IMR-90 (cell line): ENCODE measurements at regions of chr13 and their contacts with region 1.

Region 1: GRCh38 chr13:49314344-49314882 is 66.7 kb downstream of the CDADC1 start:
- DNase-seq: peak; percentile 65
- ATAC-seq: peak; percentile 45
- H3K4me3 ChIP-seq: no peak overlapping the region
- H3K27ac ChIP-seq: peak overlapping the region; percentile 97
- H3K4me1 ChIP-seq: peaks cover 17% of the 10 kb centered on the region
- H3K27me3 ChIP-seq: no peaks in the 10 kb centered on the region
- CTCF ChIP-seq: no peak
- POLR2A ChIP-seq: no peak
- RAD21 ChIP-seq: no peak

Region 2: GRCh38 chr13:49356223-49356622 is 41.8 kb after region 1 on chr13:
- CTCF ChIA-PET with region 1: interaction called, 3 read pairs
- POLR2A ChIA-PET with region 1: no interaction called
- dilution Hi-C with region 1: no loop called
- in situ Hi-C with region 1: no loop called
- intact Hi-C with region 1: loop called (anchors 5 kb)
- DNase-seq: peak; percentile 96
- ATAC-seq: peak; percentile 85
- H3K4me3 ChIP-seq: no peak overlapping the region
- H3K27ac ChIP-seq: no peak overlapping the region
- H3K4me1 ChIP-seq: peaks cover 8% of the 10 kb centered on the region
- H3K27me3 ChIP-seq: no peaks in the 10 kb centered on the region
- CTCF ChIP-seq: no peak
- POLR2A ChIP-seq: no peak
- RAD21 ChIP-seq: no peak

Region 3: GRCh38 chr13:49374585-49375290 is 60.3 kb after region 1 on chr13:
- CTCF ChIA-PET with region 1: no interaction called
- POLR2A ChIA-PET with region 1: no interaction called
- dilution Hi-C with region 1: no loop called
- in situ Hi-C with region 1: no loop called
- intact Hi-C with region 1: loop called (anchors 5 kb)
- DNase-seq: peak; percentile 87
- ATAC-seq: peak; percentile 81
- H3K4me3 ChIP-seq: no peak overlapping the region
- H3K27ac ChIP-seq: no peak overlapping the region
- H3K4me1 ChIP-seq: peaks cover 4% of the 10 kb centered on the region
- H3K27me3 ChIP-seq: no peaks in the 10 kb centered on the region
- CTCF ChIP-seq: no peak
- POLR2A ChIP-seq: no peak
- RAD21 ChIP-seq: no peak; the same call in 1 of the 2 replicates